ENCODE measurements at regions of chr14 and their contacts with region 1.

Region 1: GRCh38 chr14:58166005-58166983 is 14.3 kb upstream of the ARMH4 start:
- DNase-seq: peak; percentile 71 to 96
- H3K4me3 ChIP-seq: no peak overlapping the region
- H3K27ac ChIP-seq: 0 out of 2 replicates have a peak overlapping the region, but pooled peaks have one; percentile 35
- H3K4me1 ChIP-seq: peaks cover 0 to 4% (median 1%) of the 10 kb centered on the region in 4 experiments; a peak in 1 of 7 replicates
- H3K27me3 ChIP-seq: no peaks in the 10 kb centered on the region
- CTCF ChIP-seq: peak; percentile 84 to 87 (median 85)
- EP300 ChIP-seq: no peak
- POLR2A ChIP-seq: no peak
- RAD21 ChIP-seq: peak; percentile 84 to 85

Region 2: GRCh38 chr14:58027909-58028308 is 138.4 kb before region 1 on chr14:
- CTCF ChIA-PET with region 1: no interaction called
- POLR2A ChIA-PET with region 1: no interaction called
- DNase-seq: no peak
- H3K4me3 ChIP-seq: no peak overlapping the region
- H3K27ac ChIP-seq: no peak overlapping the region
- H3K4me1 ChIP-seq: 0 out of 7 replicates have a peak, but pooled peaks cover 0 to 2% (median 0%) of the 10 kb centered on the region in 4 experiments
- H3K27me3 ChIP-seq: no peaks in the 10 kb centered on the region
- CTCF ChIP-seq: no peak
- EP300 ChIP-seq: no peak
- POLR2A ChIP-seq: no peak
- RAD21 ChIP-seq: no peak

Region 3: DNA sequence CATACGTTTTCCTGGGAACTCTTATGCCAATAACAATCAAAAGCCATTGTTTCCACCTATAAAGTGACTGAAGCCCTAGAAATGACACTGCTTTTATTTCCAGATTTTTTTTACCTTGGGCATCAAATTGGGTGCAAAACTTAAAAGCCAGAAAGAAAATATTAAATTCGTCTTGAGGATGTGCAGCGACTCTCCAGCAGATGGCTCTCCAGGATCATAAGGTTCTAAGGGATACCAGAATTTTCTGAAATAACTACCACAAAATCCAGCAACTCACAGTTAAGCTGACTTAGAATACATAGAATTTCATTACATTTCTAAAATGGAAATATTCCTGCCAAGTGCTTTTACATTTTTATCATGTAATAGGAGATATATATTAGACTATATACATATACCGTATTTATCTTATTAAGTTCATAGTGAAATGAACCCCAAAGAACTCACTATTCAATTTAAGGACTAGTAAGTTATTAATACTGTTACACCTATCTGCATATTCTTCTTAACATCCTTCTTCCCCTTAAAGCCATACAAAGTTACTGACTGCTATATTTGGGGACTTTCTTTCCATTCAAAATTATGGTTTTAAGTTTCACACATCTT is 58.2 kb before region 1 on chr14:
- CTCF ChIA-PET with region 1: interaction called, 88 read pairs
- POLR2A ChIA-PET with region 1: no interaction called
- DNase-seq: no peak
- H3K4me3 ChIP-seq: no peak overlapping the region
- H3K27ac ChIP-seq: no peak overlapping the region
- H3K4me1 ChIP-seq: no peaks in the 10 kb centered on the region
- H3K27me3 ChIP-seq: no peaks in the 10 kb centered on the region
- CTCF ChIP-seq: peak in 2 of 3 experiments; percentile 63 to 68; a peak in 3 of 4 replicates
- EP300 ChIP-seq: no peak
- POLR2A ChIP-seq: no peak
- RAD21 ChIP-seq: peak; percentile 90 to 94

Region 4: GRCh38 chr14:58131386-58131785 is 34.9 kb before region 1 on chr14:
- CTCF ChIA-PET with region 1: interaction called, 30 read pairs
- POLR2A ChIA-PET with region 1: no interaction called
- DNase-seq: no peak
- H3K4me3 ChIP-seq: no peak overlapping the region
- H3K27ac ChIP-seq: no peak overlapping the region
- H3K4me1 ChIP-seq: peaks cover 0 to 2% (median 0%) of the 10 kb centered on the region in 4 experiments; a peak in 1 of 7 replicates
- H3K27me3 ChIP-seq: no peaks in the 10 kb centered on the region
- CTCF ChIP-seq: peak in 2 of 3 experiments; percentile 11 to 29; a peak in 1 of 4 replicates
- EP300 ChIP-seq: no peak
- POLR2A ChIP-seq: no peak
- RAD21 ChIP-seq: peak; percentile 10 to 30; a peak in 2 of 4 replicates

Region 5: DNA sequence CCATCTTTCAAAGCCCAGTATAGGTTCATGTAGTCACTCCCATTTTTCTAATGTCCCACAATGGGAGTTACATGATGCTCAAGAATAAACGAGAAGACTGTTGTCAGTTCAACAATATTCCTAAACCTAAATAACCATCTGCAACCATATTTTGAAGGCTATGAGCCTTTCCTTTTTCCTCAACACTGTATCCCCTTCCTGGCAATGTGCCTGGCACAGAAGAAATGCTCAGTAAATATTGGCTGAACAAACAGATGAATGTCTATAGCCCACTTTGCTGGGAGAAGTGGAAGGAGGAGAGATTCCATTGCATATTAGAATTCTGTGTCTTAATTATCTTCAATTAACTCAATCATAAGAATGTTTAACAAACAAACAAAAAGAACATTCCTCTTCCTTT is 20.4 kb before region 1 on chr14:
- CTCF ChIA-PET with region 1: interaction called, 30 read pairs
- POLR2A ChIA-PET with region 1: interaction called, 3 read pairs
- DNase-seq: no peak
- H3K4me3 ChIP-seq: no peak overlapping the region
- H3K27ac ChIP-seq: no peak overlapping the region
- H3K4me1 ChIP-seq: peaks cover 0 to 13% (median 5%) of the 10 kb centered on the region in 4 experiments; a peak in 5 of 7 replicates
- H3K27me3 ChIP-seq: peaks cover 0 to 8% (median 5%) of the 10 kb centered on the region in 4 experiments; a peak in 4 of 7 replicates
- CTCF ChIP-seq: no peak
- EP300 ChIP-seq: no peak
- POLR2A ChIP-seq: no peak
- RAD21 ChIP-seq: no peak

Region 6: DNA sequence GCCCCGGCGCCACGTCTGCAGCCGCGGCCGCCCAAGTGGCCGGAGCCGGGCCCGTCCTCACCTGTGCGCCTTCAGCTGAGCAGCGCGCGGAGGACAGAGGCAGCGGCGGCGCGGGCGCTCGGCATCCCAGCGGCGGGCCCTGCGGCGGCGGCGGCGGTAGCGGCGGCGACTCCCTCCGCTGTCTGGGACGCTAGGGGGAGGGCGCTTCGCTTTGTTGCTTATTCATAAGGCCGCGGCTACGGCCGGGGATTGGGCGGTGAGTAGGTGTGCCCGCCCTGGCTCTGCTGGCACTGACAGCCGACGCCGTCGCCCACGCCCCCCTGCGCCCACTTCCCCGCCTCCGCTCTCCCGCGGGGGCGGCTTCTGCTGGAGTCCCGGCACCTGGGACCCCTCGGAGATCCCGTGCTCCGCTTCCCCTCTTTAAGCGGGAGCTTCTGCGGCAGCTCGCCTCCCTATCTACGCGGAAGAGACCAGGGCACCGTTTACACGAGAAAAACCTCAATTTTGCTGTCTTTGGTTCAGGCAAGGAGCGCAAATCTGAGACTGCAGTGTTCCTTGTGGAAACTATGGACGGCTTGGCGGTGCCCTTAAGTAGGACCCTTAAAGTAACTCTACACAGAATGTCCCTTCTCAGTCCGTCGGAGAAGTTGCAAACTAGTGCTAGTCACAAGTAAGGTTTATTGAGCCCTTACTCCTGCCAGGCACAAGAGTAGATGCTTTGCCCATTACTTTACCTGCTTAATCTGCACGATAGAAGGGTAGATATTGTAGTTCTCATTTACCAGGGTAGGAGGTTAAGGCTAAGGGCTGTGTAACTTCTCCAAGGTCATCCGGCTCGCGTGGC is 14.1 kb before region 1 on chr14 and contains the start of gene ARMH4:
- CTCF ChIA-PET with region 1: interaction called, 30 read pairs
- POLR2A ChIA-PET with region 1: interaction called, 3 read pairs
- DNase-seq: peak; percentile 59 to 86
- H3K4me3 ChIP-seq: peak within 1 kb of the TSS; percentile 70 to 92 (median 74)
- H3K27ac ChIP-seq: no peak within 1 kb of the TSS
- H3K4me1 ChIP-seq: peaks cover 2 to 19% (median 8%) of the 10 kb centered on the region in 4 experiments; a peak in 6 of 7 replicates
- H3K27me3 ChIP-seq: peaks cover 0 to 16% (median 11%) of the 10 kb centered on the region in 4 experiments; a peak in 6 of 7 replicates
- CTCF ChIP-seq: no peak
- EP300 ChIP-seq: peak in 1 of 2 experiments; percentile 62; a peak in 1 of 3 replicates
- POLR2A ChIP-seq: peak in 1 of 2 experiments; percentile 48; a peak in 2 of 3 replicates
- RAD21 ChIP-seq: no peak
- total RNA-seq, gene ARMH4: 24.8 and 25.4 TPM in 2 replicates

Region 7: DNA sequence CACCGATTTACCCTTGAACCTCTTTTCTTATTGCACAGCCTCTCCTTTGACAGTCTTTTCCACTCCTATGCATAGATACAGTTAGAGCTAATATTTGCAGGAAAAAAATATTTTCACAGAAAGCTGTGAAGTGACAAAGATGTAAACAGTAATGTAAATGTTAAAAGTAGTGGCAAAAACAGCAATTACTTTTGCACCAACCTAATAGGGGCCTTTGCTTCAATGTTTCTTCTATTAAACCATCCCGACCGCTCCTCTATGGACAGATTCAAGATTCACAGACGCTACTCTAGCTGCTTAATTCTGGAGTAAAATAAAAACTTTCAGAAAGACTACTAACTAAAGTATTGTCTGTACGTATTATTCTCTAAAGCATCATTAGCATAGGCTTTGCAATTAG is 32.9 kb after region 1 on chr14:
- CTCF ChIA-PET with region 1: interaction called, 12 read pairs
- POLR2A ChIA-PET with region 1: no interaction called
- DNase-seq: no peak
- H3K4me3 ChIP-seq: peak overlapping the region; percentile 86 to 97 (median 94)
- H3K27ac ChIP-seq: no peak overlapping the region
- H3K4me1 ChIP-seq: no peaks in the 10 kb centered on the region
- H3K27me3 ChIP-seq: peaks cover 0 to 1% (median 0%) of the 10 kb centered on the region in 4 experiments; a peak in 1 of 7 replicates
- CTCF ChIP-seq: no peak
- EP300 ChIP-seq: no peak
- POLR2A ChIP-seq: no peak
- RAD21 ChIP-seq: no peak

Measured in H1 (cell line).